ENCODE measurements at regions of chr11 and their contacts with region 1.

Region 1: GRCh38 chr11:64317957-64318693 is at the start of gene PRDX5:
- DNase-seq: peak; percentile 94 to 97 (median 96)
- ATAC-seq: peak; percentile 85
- H3K4me3 ChIP-seq: peak within 1 kb of the TSS; percentile 94
- H3K27ac ChIP-seq: peak within 1 kb of the TSS; percentile 99
- H3K4me1 ChIP-seq: peaks cover 9 to 66% of the 10 kb centered on the region in 2 experiments; a peak in 4 of 5 replicates
- H3K27me3 ChIP-seq: no peaks in the 10 kb centered on the region
- CTCF ChIP-seq: peak; percentile 65 to 96 (median 94)
- EP300 ChIP-seq: no peak
- POLR2A ChIP-seq: peak; percentile 70
- RAD21 ChIP-seq: peak; percentile 90 to 91
- polyA plus RNA-seq, gene PRDX5: 40.8 to 64.2 TPM

Region 2: GRCh38 chr11:64331557-64332371 is 13.6 kb after region 1 on chr11:
- CTCF ChIA-PET with region 1: interaction called, 4 read pairs
- POLR2A ChIA-PET with region 1: interaction called, 15 read pairs
- in situ Hi-C with region 1: no loop called
- intact Hi-C with region 1: loop called (anchors 1 kb)
- DNase-seq: peak; percentile 72 to 91 (median 74)
- ATAC-seq: peak; percentile 77
- H3K4me3 ChIP-seq: no peak overlapping the region
- H3K27ac ChIP-seq: peak overlapping the region; percentile 79
- H3K4me1 ChIP-seq: peaks cover 32 to 48% of the 10 kb centered on the region in 2 experiments
- H3K27me3 ChIP-seq: no peaks in the 10 kb centered on the region
- CTCF ChIP-seq: peak; percentile 75 to 79 (median 78)
- EP300 ChIP-seq: peak; percentile 32; the same call in 1 of the 2 replicates
- POLR2A ChIP-seq: 0 out of 2 replicates have a peak, but pooled peaks have one; percentile 53
- RAD21 ChIP-seq: peak; percentile 51 to 71

Region 3: DNA sequence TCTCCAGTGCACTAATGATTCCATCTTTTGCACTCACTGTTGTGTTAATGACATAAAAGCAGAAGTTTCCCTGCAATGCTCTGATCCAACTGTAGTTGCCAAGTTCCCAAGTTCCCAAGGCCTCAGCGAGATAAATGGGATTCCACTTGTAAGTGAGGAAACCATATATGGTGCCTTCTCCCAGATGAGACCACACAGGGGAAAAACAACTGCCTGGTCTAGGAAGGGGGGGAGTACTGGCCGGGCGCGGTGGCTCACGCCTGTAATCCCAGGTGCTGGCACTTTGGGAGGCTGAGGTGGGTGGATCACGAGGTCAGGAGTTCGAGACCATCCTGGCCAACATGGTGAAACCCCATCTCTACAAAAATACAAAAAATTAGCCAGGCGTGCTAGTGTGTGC is 1367.9 kb after region 1 on chr11:
- CTCF ChIA-PET with region 1: no interaction called
- POLR2A ChIA-PET with region 1: no interaction called
- in situ Hi-C with region 1: no loop called
- intact Hi-C with region 1: no loop called
- DNase-seq: no peak
- ATAC-seq: no peak
- H3K4me3 ChIP-seq: no peak overlapping the region
- H3K27ac ChIP-seq: no peak overlapping the region
- H3K4me1 ChIP-seq: no peaks in the 10 kb centered on the region; a peak in 1 of 5 replicates
- H3K27me3 ChIP-seq: no peaks in the 10 kb centered on the region; a peak in 1 of 5 replicates
- CTCF ChIP-seq: no peak
- EP300 ChIP-seq: no peak
- POLR2A ChIP-seq: no peak
- RAD21 ChIP-seq: no peak